ENCODE measurements at regions of chr9 and their contacts with region 1.

Region 1: DNA sequence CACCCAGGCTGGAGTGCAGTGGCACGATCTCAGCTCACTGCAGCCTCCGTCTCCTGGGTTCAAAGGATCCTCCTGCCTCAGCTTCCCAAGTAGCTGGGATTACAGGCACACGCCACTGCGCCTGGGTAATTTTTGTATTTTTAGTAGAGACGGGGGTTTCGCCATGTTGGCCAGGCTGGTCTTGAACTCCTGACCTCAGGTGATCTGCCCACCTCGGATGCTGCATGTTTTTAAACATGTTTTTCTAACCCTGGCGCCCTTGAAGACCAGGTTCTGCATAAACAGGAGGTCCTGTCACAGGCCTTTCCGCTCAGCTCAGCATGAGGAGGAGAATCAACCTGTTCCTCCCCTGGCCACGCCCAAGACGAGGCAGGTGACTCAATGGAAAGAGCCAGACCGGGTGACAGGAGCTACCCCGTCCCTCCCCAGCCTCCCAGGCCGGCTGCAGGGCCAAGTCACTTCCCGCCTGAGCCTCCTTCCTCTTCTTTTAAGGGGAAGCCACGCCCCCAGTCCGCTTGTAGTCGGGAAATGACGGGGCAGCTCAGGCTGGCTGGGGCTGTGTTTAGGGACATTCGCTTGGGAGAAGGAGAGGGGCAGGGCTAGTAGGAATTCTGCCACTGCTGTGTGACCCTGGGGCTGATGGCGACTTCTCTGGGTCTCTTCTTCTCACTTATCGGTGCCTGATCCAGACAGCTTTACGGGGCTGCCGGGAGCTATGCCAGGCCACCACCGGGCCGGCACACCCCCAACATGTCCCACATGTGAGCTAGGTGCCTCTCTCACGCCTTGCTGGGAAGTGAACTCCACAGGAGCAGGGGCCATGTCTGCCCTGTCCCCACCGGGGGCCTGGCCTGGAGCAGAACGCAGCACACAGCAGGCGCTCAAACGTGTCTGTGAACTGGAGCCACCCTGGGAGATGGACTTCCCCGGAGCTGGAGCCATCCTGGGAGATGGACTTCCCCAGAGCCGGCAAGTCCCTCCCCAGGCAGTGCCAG is 6.1 kb downstream of the NOTCH1 start:
- DNase-seq: peak; percentile 70
- ATAC-seq: peak; percentile 84
- H3K4me3 ChIP-seq: peak overlapping the region; percentile 13
- H3K27ac ChIP-seq: peak overlapping the region; percentile 64
- H3K4me1 ChIP-seq: peaks cover 56% of the 10 kb centered on the region
- H3K27me3 ChIP-seq: no peaks in the 10 kb centered on the region
- CTCF ChIP-seq: no peak
- EP300 ChIP-seq: no peak
- POLR2A ChIP-seq: peak; percentile 50; the same call in 1 of the 2 replicates
- RAD21 ChIP-seq: no peak

Region 2: GRCh38 chr9:136488247-136489214 is 51.2 kb before region 1 on chr9:
- CTCF ChIA-PET with region 1: interaction called, 27 read pairs
- POLR2A ChIA-PET with region 1: interaction called, 3 read pairs
- RAD21 ChIA-PET with region 1: interaction called, 10 read pairs
- SMC1A ChIA-PET with region 1: interaction called, 4 read pairs
- in situ Hi-C with region 1: no loop called
- intact Hi-C with region 1: no loop called
- DNase-seq: no peak
- ATAC-seq: peak; percentile 72
- H3K4me3 ChIP-seq: no peak overlapping the region
- H3K27ac ChIP-seq: no peak overlapping the region
- H3K4me1 ChIP-seq: peaks cover 6% of the 10 kb centered on the region; the same call in 1 of the 2 replicates
- H3K27me3 ChIP-seq: no peaks in the 10 kb centered on the region
- CTCF ChIP-seq: peak; percentile 89 to 98 (median 91)
- EP300 ChIP-seq: no peak
- POLR2A ChIP-seq: no peak
- RAD21 ChIP-seq: peak; percentile 93

Region 3: GRCh38 chr9:136551401-136552116 is 11.8 kb after region 1 on chr9:
- CTCF ChIA-PET with region 1: interaction called, 15 read pairs
- POLR2A ChIA-PET with region 1: interaction called, 19 read pairs
- RAD21 ChIA-PET with region 1: interaction called, 24 read pairs
- SMC1A ChIA-PET with region 1: interaction called, 11 read pairs
- in situ Hi-C with region 1: no loop called
- intact Hi-C with region 1: no loop called
- DNase-seq: no peak
- ATAC-seq: peak; percentile 85
- H3K4me3 ChIP-seq: peak overlapping the region; percentile 26; the same call in 1 of the 2 replicates
- H3K27ac ChIP-seq: peak overlapping the region; percentile 62
- H3K4me1 ChIP-seq: peaks cover 35% of the 10 kb centered on the region
- H3K27me3 ChIP-seq: no peaks in the 10 kb centered on the region
- CTCF ChIP-seq: peak in 1 of 3 experiments; percentile 31; a peak in 1 of 6 replicates
- EP300 ChIP-seq: no peak
- POLR2A ChIP-seq: no peak
- RAD21 ChIP-seq: no peak

Region 4: GRCh38 chr9:136625101-136626060 is 85.7 kb after region 1 on chr9:
- CTCF ChIA-PET with region 1: interaction called, 13 read pairs
- POLR2A ChIA-PET with region 1: interaction called, 7 read pairs
- RAD21 ChIA-PET with region 1: interaction called, 6 read pairs
- SMC1A ChIA-PET with region 1: interaction called, 10 read pairs
- in situ Hi-C with region 1: no loop called
- intact Hi-C with region 1: no loop called
- DNase-seq: no peak
- ATAC-seq: no peak; the same call in 1 of the 3 replicates
- H3K4me3 ChIP-seq: no peak overlapping the region
- H3K27ac ChIP-seq: no peak overlapping the region
- H3K4me1 ChIP-seq: no peaks in the 10 kb centered on the region; the same call in 1 of the 2 replicates
- H3K27me3 ChIP-seq: no peaks in the 10 kb centered on the region; a peak in 1 of 4 replicates
- CTCF ChIP-seq: peak; percentile 7 to 52 (median 31); a peak in 2 of 6 replicates
- EP300 ChIP-seq: no peak
- POLR2A ChIP-seq: no peak
- RAD21 ChIP-seq: peak; percentile 54

Region 5: DNA sequence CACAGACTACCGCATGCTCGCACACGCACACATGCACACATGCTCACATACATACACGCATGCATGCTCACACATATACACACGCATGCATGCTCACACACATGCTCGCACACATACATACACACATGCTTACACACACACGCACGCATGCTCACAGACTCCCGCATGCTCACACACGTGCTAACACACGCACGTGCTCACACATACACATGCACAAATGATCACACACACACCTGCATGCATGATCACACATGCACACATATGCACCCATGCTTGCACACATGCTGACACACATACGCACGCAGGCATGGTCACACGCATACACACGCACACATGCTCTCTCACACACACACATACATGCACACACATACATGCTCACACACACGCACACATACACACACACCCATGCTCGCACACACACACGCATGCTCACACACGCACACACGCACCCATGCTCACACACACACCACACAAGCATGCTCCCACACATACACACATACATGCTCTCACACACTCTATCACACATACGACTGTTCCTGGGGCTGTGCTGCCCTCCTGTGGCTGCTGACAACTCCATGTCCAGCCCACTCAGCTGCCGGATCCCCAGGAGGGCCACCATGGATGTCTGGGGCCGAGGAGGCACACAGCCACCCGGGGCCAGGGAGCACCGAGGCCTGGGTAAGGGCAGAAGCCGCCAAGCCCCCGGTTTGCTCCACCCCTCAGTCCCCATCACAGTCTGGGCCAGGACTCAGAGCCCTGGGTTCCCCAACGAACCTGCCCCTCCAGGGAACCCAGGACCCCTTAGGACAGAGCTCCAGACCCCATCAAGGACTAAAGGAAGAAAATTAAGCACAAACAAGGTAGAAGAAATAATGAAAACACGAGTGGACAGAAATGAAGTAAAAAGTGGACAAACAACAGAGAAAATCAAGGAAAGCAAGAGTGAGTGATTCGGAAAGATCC is 91.6 kb after region 1 on chr9:
- CTCF ChIA-PET with region 1: interaction called, 13 read pairs
- POLR2A ChIA-PET with region 1: interaction called, 7 read pairs
- RAD21 ChIA-PET with region 1: interaction called, 5 read pairs
- SMC1A ChIA-PET with region 1: interaction called, 10 read pairs
- in situ Hi-C with region 1: no loop called
- intact Hi-C with region 1: no loop called
- DNase-seq: peak; percentile 40
- ATAC-seq: peak; percentile 96
- H3K4me3 ChIP-seq: no peak overlapping the region
- H3K27ac ChIP-seq: no peak overlapping the region
- H3K4me1 ChIP-seq: no peaks in the 10 kb centered on the region; the same call in 1 of the 2 replicates
- H3K27me3 ChIP-seq: no peaks in the 10 kb centered on the region; a peak in 2 of 4 replicates
- CTCF ChIP-seq: peak; percentile 72 to 89 (median 88)
- EP300 ChIP-seq: no peak
- POLR2A ChIP-seq: no peak
- RAD21 ChIP-seq: peak; percentile 98

Region 6: GRCh38 chr9:136943291-136944211 is 403.8 kb after region 1 on chr9:
- CTCF ChIA-PET with region 1: no interaction called
- POLR2A ChIA-PET with region 1: no interaction called
- RAD21 ChIA-PET with region 1: no interaction called
- SMC1A ChIA-PET with region 1: no interaction called
- in situ Hi-C with region 1: no loop called
- intact Hi-C with region 1: no loop called
- DNase-seq: no peak
- ATAC-seq: peak; percentile 46
- H3K4me3 ChIP-seq: peak overlapping the region; percentile 98
- H3K27ac ChIP-seq: peak overlapping the region; percentile 91
- H3K4me1 ChIP-seq: peaks cover 4% of the 10 kb centered on the region
- H3K27me3 ChIP-seq: no peaks in the 10 kb centered on the region
- CTCF ChIP-seq: 0 out of 6 replicates have a peak, but pooled peaks of 1 of the 3 experiments have one; percentile 13
- EP300 ChIP-seq: no peak
- POLR2A ChIP-seq: no peak
- RAD21 ChIP-seq: no peak

Measured in GM12878 (cell line).